Activated B cell treated with CpG ODN at 0.5 μM for 24 hours (primary cell): ENCODE measurements at regions of chr17 and their contacts with region 1.

Region 1: DNA sequence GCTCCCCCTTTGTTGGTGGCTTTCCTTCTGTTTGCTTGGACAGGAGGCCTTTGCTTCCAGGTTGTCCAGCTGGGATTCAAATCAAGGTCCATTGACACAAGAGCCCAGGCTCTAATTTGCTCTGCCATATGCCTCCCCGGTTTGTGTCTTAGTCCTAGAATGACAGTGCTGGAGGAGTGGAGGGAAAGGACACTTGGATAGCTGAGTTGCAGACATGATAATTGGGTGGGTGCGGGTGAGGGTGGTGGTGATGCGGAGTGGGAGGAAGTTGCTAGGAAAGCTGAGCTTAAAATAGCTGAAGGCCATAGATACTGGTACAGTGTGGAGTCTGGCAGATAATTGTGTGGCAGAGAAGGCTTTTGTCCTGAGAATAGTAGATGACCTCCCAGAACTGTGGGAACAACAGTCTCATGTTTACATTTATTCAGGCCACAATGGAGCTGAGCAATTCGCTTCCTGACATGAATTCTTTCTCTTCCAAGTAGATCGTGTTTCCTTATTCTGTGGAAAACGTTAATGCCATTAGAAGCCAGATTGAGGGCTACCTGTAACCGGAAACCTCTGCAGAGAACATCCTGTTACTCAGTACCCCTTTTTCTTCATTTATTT is 23.8 kb downstream of the SEC14L1 start:
- DNase-seq: no peak
- ATAC-seq: no peak
- H3K4me3 Mint-ChIP-seq: peak overlapping the region; percentile 54
- H3K27ac Mint-ChIP-seq: peak overlapping the region; percentile 70
- H3K4me1 Mint-ChIP-seq: peaks cover 60% of the 10 kb centered on the region
- H3K27me3 Mint-ChIP-seq: no peaks in the 10 kb centered on the region
- CTCF ChIP-seq: no peak

Region 2: GRCh38 chr17:77151186-77151585 is 13.4 kb before region 1 on chr17:
- CTCF ChIA-PET with region 1: no interaction called
- POLR2A ChIA-PET with region 1: no interaction called
- intact Hi-C with region 1: loop called (anchors 2 kb)
- DNase-seq: no peak
- ATAC-seq: no peak
- H3K4me3 Mint-ChIP-seq: no peak overlapping the region
- H3K27ac Mint-ChIP-seq: no peak overlapping the region
- H3K4me1 Mint-ChIP-seq: peaks cover 46% of the 10 kb centered on the region
- H3K27me3 Mint-ChIP-seq: no peaks in the 10 kb centered on the region
- CTCF ChIP-seq: no peak